ENCODE measurements at regions of chr2 and their contacts with region 1.

Region 1: GRCh38 chr2:24421668-24422067 is 61.3 kb upstream of the ITSN2 start:
- DNase-seq: peak; percentile 78 to 82
- H3K4me3 ChIP-seq: no peak overlapping the region
- H3K4me3 Mint-ChIP-seq: no peak overlapping the region
- H3K27ac Mint-ChIP-seq: no peak overlapping the region
- H3K4me1 ChIP-seq: peaks cover 13% of the 10 kb centered on the region
- H3K4me1 Mint-ChIP-seq: peaks cover 9% of the 10 kb centered on the region
- H3K27me3 ChIP-seq: no peaks in the 10 kb centered on the region
- H3K27me3 Mint-ChIP-seq: no peaks in the 10 kb centered on the region
- CTCF ChIP-seq: peak; percentile 58 to 60

Region 2: GRCh38 chr2:24329700-24330099 is 92.0 kb before region 1 on chr2:
- CTCF ChIA-PET with region 1: no interaction called
- POLR2A ChIA-PET with region 1: no interaction called
- intact Hi-C with region 1: no loop called
- DNase-seq: no peak
- H3K4me3 ChIP-seq: no peak overlapping the region
- H3K4me3 Mint-ChIP-seq: no peak overlapping the region
- H3K27ac Mint-ChIP-seq: no peak overlapping the region
- H3K4me1 ChIP-seq: no peaks in the 10 kb centered on the region
- H3K4me1 Mint-ChIP-seq: no peaks in the 10 kb centered on the region
- H3K27me3 ChIP-seq: no peaks in the 10 kb centered on the region
- H3K27me3 Mint-ChIP-seq: no peaks in the 10 kb centered on the region
- CTCF ChIP-seq: no peak

Region 3: GRCh38 chr2:24490674-24491625 is 69.3 kb after region 1 on chr2 and contains the start of gene NCOA1:
- CTCF ChIA-PET with region 1: interaction called, 5 read pairs
- POLR2A ChIA-PET with region 1: no interaction called
- intact Hi-C with region 1: loop called (anchors 1 kb)
- DNase-seq: peak; percentile 93
- H3K4me3 ChIP-seq: peak within 1 kb of the TSS; percentile 96
- H3K4me3 Mint-ChIP-seq: peak within 1 kb of the TSS; percentile 74
- H3K27ac Mint-ChIP-seq: peak within 1 kb of the TSS; percentile 69
- H3K4me1 ChIP-seq: peaks cover 43% of the 10 kb centered on the region
- H3K4me1 Mint-ChIP-seq: peaks cover 53% of the 10 kb centered on the region
- H3K27me3 ChIP-seq: no peaks in the 10 kb centered on the region
- H3K27me3 Mint-ChIP-seq: no peaks in the 10 kb centered on the region
- CTCF ChIP-seq: peak; percentile 18 to 50
- total RNA-seq, gene NCOA1: 34.7 and 37.1 TPM in 2 replicates

Region 4: GRCh38 chr2:24543252-24543651 is 121.6 kb after region 1 on chr2:
- CTCF ChIA-PET with region 1: no interaction called
- POLR2A ChIA-PET with region 1: interaction called, 5 read pairs
- intact Hi-C with region 1: loop called (anchors 10 kb)
- DNase-seq: no peak
- H3K4me3 ChIP-seq: no peak overlapping the region
- H3K4me3 Mint-ChIP-seq: no peak overlapping the region
- H3K27ac Mint-ChIP-seq: no peak overlapping the region
- H3K4me1 ChIP-seq: no peaks in the 10 kb centered on the region
- H3K4me1 Mint-ChIP-seq: no peaks in the 10 kb centered on the region
- H3K27me3 ChIP-seq: no peaks in the 10 kb centered on the region
- H3K27me3 Mint-ChIP-seq: no peaks in the 10 kb centered on the region
- CTCF ChIP-seq: peak in 1 of 2 experiments; percentile 27